CD4-positive, alpha-beta T cell (primary cell): ENCODE measurements at regions of chr15 and their contacts with region 1.

Region 1: DNA sequence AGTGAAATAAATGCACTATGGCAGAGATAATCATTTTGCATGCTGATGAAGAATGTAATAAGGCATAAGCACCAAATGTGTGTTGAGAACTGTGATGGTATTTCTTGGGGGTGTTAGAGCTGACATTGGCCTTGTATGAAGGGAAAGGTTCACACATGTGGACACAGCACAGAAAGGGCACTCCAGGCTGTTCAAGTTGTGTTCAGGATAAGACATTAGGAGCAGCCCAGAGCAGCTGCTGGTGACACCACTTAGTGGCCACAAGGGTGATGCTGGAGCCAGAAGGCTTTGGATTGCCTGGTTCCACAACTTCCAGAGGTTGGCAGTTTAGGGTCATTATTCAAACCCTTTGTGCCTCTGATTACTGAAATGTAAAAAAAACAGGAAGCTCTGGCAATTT is 155.4 kb downstream of the GOLGA6L6 start:
- DNase-seq: no peak
- ATAC-seq: no peak
- H3K4me3 ChIP-seq: no peak overlapping the region
- H3K4me3 Mint-ChIP-seq: no peak overlapping the region
- H3K27ac ChIP-seq: no peak overlapping the region
- H3K27ac Mint-ChIP-seq: no peak overlapping the region
- H3K4me1 ChIP-seq: no peaks in the 10 kb centered on the region
- H3K4me1 Mint-ChIP-seq: no peaks in the 10 kb centered on the region
- H3K27me3 ChIP-seq: no peaks in the 10 kb centered on the region
- H3K27me3 Mint-ChIP-seq: no peaks in the 10 kb centered on the region
- CTCF ChIP-seq: no peak

Region 2: GRCh38 chr15:20305040-20305392 is 81.2 kb before region 1 on chr15:
- CTCF ChIA-PET with region 1: no interaction called
- POLR2A ChIA-PET with region 1: no interaction called
- intact Hi-C with region 1: loop called in 1 of 2 experiments (anchors 5 kb)
- DNase-seq: no peak
- ATAC-seq: no peak
- H3K4me3 ChIP-seq: no peak overlapping the region
- H3K4me3 Mint-ChIP-seq: no peak overlapping the region
- H3K27ac ChIP-seq: no peak overlapping the region
- H3K27ac Mint-ChIP-seq: no peak overlapping the region
- H3K4me1 ChIP-seq: no peaks in the 10 kb centered on the region
- H3K4me1 Mint-ChIP-seq: no peaks in the 10 kb centered on the region
- H3K27me3 ChIP-seq: no peaks in the 10 kb centered on the region
- H3K27me3 Mint-ChIP-seq: peaks cover 6% of the 10 kb centered on the region
- CTCF ChIP-seq: no peak

Region 3: DNA sequence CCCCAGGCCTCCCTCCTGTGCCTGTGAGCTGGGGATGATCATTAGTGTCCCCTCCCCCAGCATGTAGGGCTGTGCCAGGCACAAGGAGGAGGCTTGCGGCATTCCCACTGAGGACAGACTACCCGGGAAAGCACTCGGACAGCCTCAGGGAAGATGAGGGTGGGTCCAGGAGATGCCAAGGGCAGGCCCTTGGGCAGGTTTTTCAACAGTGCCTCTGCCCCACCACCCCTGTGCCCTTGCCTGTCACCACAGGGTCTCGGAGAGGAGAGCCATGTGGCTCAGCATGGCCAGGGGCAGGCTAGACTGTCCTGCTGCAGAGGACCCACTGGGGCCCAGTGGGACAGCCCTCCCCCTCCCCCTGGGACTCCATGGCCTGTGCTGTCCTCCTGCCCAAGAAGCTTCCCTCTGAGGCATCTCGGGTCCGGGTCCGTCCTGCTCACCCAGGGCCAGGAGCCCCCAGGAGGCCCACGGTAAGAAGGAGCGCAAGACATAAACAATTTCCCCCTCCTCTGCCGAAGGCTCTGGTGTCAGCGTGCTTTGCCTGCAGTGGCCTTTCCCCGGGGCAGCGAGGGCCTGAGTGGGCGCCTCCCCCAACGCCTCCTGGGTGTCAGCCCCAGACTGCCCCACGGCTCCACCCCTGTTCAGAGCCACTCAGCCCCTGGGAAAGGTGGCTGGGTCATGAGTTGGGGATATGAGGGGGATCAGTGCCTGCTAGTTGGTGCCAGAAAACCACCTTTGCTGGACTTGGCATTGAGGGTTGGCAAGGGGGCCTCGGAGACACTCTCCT is 37.0 kb before region 1 on chr15:
- CTCF ChIA-PET with region 1: no interaction called
- POLR2A ChIA-PET with region 1: no interaction called
- intact Hi-C with region 1: no loop called
- DNase-seq: peak in 3 of 14 experiments; percentile 23 to 44 (median 43)
- ATAC-seq: no peak
- H3K4me3 ChIP-seq: no peak overlapping the region
- H3K4me3 Mint-ChIP-seq: no peak overlapping the region
- H3K27ac ChIP-seq: no peak overlapping the region
- H3K27ac Mint-ChIP-seq: no peak overlapping the region
- H3K4me1 ChIP-seq: peaks cover 22% of the 10 kb centered on the region
- H3K4me1 Mint-ChIP-seq: no peaks in the 10 kb centered on the region
- H3K27me3 ChIP-seq: no peaks in the 10 kb centered on the region
- H3K27me3 Mint-ChIP-seq: peaks cover 8% of the 10 kb centered on the region
- CTCF ChIP-seq: no peak